ENCODE measurements at regions of chr1 and their contacts with region 1.

Region 1: GRCh38 chr1:156608036-156608674 is 6.9 kb upstream of the GPATCH4 start:
- DNase-seq: no peak
- H3K4me3 ChIP-seq: no peak overlapping the region
- H3K27ac ChIP-seq: peak overlapping the region in 1 of 2 donors; percentile 14
- H3K4me1 ChIP-seq: peaks cover 0 to 6% (median 0%) of the 10 kb centered on the region in 4 donors
- H3K27me3 ChIP-seq: no peaks in the 10 kb centered on the region
- CTCF ChIP-seq: peak; percentile 83 to 89

Region 2: DNA sequence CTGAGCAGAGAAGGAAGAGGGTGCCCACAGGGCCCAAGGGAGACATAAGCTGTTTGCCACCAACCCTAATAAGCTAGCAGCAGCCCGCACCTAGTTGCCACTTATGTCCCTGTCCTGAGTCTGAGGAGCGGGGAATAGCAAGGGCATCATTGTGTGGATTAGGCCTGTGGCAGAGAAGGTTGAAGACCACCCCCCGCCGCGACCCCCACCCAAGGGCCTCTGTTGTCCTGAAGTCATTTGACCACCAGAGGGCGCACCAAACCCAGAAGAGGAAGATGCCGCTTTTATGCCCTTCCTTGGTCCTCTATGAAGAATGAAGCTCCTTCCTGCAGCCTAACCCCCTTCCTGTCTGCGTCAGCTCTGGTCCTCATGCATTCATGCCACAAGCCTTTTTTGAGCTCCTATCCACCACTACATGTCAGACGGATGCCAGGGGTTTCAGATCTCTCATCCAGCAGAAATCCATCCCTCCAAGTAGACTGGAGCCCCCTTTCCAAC is 222.6 kb before region 1 on chr1:
- intact Hi-C with region 1: loop called (anchors 5 kb)
- DNase-seq: peak in 1 of 2 donors; percentile 57
- H3K4me3 ChIP-seq: no peak overlapping the region
- H3K27ac ChIP-seq: no peak overlapping the region
- H3K4me1 ChIP-seq: peaks cover 0 to 9% (median 0%) of the 10 kb centered on the region in 4 donors
- H3K27me3 ChIP-seq: peaks cover 0 to 52% of the 10 kb centered on the region in 2 donors
- CTCF ChIP-seq: peak; percentile 86 to 93

Region 3: DNA sequence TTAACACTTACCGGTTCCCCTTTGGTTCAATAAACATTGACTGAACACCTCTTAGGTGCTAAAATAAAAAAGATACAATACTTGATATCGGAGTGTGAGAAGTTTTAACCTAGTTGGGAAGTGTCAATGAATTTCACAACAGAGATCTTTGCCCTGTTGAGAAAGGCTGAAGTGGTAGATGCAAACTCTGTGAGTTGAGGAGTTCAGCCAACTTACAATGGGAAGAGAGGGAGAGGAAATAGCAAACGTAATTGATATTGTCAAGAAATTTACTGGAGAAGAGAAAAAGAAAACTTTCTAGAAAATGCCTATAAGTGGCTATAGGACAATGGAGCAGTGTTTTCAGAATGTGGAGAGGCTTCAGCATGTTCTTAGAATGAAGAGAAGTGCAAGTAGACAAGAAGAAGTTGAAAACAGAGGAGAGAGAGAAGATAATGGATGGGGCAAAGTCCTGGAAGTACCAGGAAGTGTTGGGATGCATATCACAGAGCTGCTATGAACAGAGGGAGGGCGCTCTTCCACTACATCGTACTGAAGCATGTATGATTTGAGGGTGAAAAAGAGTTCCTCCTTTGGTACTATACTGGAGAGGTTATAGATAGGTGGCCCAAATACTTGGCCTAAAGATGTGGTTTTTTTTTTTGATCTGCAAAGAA is 156.5 kb before region 1 on chr1:
- intact Hi-C with region 1: loop called (anchors 5 kb)
- DNase-seq: no peak
- H3K4me3 ChIP-seq: no peak overlapping the region
- H3K27ac ChIP-seq: no peak overlapping the region
- H3K4me1 ChIP-seq: peaks cover 0 to 5% (median 0%) of the 10 kb centered on the region in 4 donors
- H3K27me3 ChIP-seq: peaks cover 0 to 8% of the 10 kb centered on the region in 2 donors
- CTCF ChIP-seq: no peak

Region 4: GRCh38 chr1:156740679-156741612 is 132.8 kb after region 1 on chr1 and contains the start of gene MRPL24:
- intact Hi-C with region 1: no loop called
- DNase-seq: peak; percentile 99
- H3K4me3 ChIP-seq: peak within 1 kb of the TSS; percentile 64 to 71
- H3K27ac ChIP-seq: peak within 1 kb of the TSS; percentile 80 to 83
- H3K4me1 ChIP-seq: peaks cover 0 to 35% (median 22%) of the 10 kb centered on the region in 4 donors
- H3K27me3 ChIP-seq: no peaks in the 10 kb centered on the region
- CTCF ChIP-seq: no peak